A549 (cell line): ENCODE measurements at regions of chr9 and their contacts with region 1.

Region 1: DNA sequence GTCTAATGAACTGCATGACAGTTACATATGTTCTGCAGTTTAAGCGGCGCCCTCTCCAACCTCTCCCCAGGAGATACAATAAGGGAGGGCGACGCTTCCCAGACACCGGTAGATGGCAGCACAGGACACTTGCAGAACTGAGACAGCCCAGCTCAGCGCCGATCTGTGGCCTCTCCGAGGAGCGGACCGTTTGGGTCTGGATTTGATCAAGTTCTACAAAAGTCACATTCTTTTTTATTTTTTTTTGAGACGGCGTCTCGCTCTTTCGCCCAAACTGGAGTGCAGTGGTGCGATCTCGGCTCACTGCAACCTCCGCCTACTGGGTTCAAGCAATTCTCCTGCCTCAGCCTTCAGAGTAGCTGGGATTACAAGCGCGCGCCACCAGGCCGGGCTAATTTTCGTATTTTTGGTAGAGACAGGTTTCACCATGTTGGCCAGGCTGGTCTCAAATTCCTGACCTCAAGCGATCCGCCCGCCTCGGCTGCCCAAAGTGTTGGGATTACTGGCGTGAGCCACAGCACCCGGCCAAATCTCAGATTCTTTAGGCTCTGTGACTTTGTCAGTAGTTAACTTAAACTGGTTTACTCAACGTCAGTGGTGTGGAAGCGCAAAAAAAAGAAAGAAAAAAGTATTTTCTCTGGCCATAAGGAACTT is 1.4 kb upstream of the ATOSB start:
- DNase-seq: peak; percentile 90 to 93
- ATAC-seq: peak; percentile 65 to 83
- H3K4me3 ChIP-seq: peak overlapping the region; percentile 48
- H3K27ac ChIP-seq: peak overlapping the region; percentile 44 to 71; a peak in 4 of 6 replicates
- H3K4me1 ChIP-seq: peaks cover 27% of the 10 kb centered on the region
- CTCF ChIP-seq: peak; percentile 98
- EP300 ChIP-seq: no peak
- POLR2A ChIP-seq: no peak
- RAD21 ChIP-seq: peak; percentile 94 to 96

Region 2: GRCh38 chr9:35071814-35072460 is 45.1 kb before region 1 on chr9:
- CTCF ChIA-PET with region 1: interaction called, 6 read pairs
- POLR2A ChIA-PET with region 1: interaction called, 14 read pairs
- DNase-seq: peak; percentile 77 to 92
- ATAC-seq: peak; percentile 81 to 87
- H3K4me3 ChIP-seq: peak overlapping the region; percentile 92
- H3K27ac ChIP-seq: peak overlapping the region; percentile 97 to 98
- H3K4me1 ChIP-seq: peaks cover 28% of the 10 kb centered on the region
- CTCF ChIP-seq: peak; percentile 59
- EP300 ChIP-seq: no peak
- POLR2A ChIP-seq: no peak; the same call in 1 of the 2 replicates
- RAD21 ChIP-seq: no peak

Region 3: GRCh38 chr9:35102926-35103659 is 13.9 kb before region 1 on chr9 and contains the start of gene STOML2:
- CTCF ChIA-PET with region 1: interaction called, 110 read pairs
- POLR2A ChIA-PET with region 1: interaction called, 28 read pairs
- DNase-seq: peak; percentile 97 to 98
- ATAC-seq: peak; percentile 97 to 98
- H3K4me3 ChIP-seq: peak within 1 kb of the TSS; percentile 70
- H3K27ac ChIP-seq: peak within 1 kb of the TSS; percentile 88 to 91
- H3K4me1 ChIP-seq: peaks cover 14% of the 10 kb centered on the region
- CTCF ChIP-seq: no peak
- EP300 ChIP-seq: no peak
- POLR2A ChIP-seq: peak; percentile 66
- RAD21 ChIP-seq: no peak
- polyA plus RNA-seq, gene STOML2: 196 and 230 TPM in 2 replicates

Region 4: GRCh38 chr9:35161713-35162604 is 44.9 kb after region 1 on chr9 and contains the start of gene UNC13B:
- CTCF ChIA-PET with region 1: interaction called, 6 read pairs
- POLR2A ChIA-PET with region 1: interaction called, 11 read pairs
- DNase-seq: peak; percentile 94 to 98
- ATAC-seq: peak; percentile 98 to 99
- H3K4me3 ChIP-seq: peak within 1 kb of the TSS; percentile 62
- H3K27ac ChIP-seq: peak within 1 kb of the TSS; percentile 83 to 91
- H3K4me1 ChIP-seq: peaks cover 8% of the 10 kb centered on the region; the same call in 2 of the 3 replicates
- CTCF ChIP-seq: peak; percentile 13; the same call in 1 of the 3 replicates
- EP300 ChIP-seq: no peak
- POLR2A ChIP-seq: peak; percentile 80
- RAD21 ChIP-seq: no peak
- polyA plus RNA-seq, gene UNC13B: 17.8 and 24.0 TPM in 2 replicates

Region 5: DNA sequence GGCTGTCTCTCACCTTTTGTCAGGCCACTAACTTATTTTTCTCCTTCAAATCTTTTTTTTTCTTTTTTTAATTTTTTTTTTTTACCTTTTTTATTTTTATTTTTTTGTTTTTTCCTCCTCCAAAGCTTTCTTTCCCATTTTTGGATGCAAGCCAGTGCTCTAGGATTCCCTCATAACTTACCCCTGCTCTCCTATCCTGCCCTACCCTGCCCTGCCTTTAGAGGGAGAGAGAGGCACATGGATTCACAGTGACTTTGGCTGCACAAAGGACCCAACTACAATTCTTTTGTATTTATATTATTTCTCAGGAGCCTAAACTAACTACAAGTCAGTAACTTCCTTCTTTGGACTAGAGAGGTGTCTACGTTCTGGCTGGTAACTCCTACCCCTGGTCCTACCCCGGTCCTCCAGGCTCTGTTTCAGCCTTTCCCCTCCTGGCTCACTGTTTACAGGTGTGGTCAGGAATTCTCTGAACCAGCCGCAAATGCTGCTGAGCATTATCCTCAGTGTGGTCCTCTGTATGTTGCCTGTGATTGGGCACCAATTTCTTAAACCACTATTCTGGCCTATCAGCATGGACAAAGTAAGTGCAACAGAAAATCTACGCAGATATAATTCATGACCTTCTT is 364.4 kb after region 1 on chr9:
- CTCF ChIA-PET with region 1: interaction called, 129 read pairs
- POLR2A ChIA-PET with region 1: interaction called, 3 read pairs
- DNase-seq: peak; percentile 74 to 75
- ATAC-seq: peak; percentile 73 to 80; a peak in 4 of 6 replicates
- H3K4me3 ChIP-seq: no peak overlapping the region
- H3K27ac ChIP-seq: peak overlapping the region; percentile 21 to 68
- H3K4me1 ChIP-seq: peaks cover 31% of the 10 kb centered on the region
- CTCF ChIP-seq: peak; percentile 77
- EP300 ChIP-seq: no peak
- POLR2A ChIP-seq: no peak
- RAD21 ChIP-seq: peak; percentile 88 to 95